ENCODE measurements at regions of chr1 and their contacts with region 1.

Region 1: DNA sequence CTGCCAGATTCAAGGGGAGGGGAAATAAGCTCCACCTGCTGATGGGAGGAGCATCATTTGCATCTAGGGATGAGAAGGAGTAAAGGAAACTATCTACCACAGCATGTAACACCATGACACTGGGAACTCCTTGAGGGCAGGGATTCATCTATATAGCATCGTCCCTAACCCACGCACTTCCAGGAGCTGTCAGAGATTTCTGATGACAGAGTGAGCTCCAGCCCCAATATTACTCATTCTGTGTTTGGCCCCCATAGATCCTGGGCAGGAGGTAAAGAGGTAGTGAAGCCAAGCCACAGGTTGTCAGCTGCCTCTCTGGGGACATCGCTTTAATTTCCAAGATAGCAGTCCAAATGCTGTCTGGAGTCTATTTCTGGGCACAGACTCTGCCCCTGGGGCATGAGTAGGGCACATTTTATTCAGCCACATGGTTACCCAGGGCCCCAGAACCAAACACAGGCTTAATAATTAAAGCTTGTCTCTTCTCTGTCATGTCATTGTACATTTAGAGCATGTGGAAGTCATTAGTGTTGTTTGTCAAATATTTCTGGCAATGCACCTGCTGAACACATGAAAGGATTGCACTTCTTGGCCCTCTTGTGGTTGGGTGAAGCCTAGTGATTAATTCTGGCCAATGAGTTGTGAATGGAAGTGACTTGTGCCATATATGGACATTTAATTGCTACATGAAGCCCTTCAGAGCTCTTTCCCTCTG is 105.9 kb upstream of the POU3F1 start:
- DNase-seq: peak; percentile 51
- ATAC-seq: peak; percentile 85
- H3K4me3 ChIP-seq: no peak overlapping the region
- H3K27ac ChIP-seq: no peak overlapping the region
- H3K4me1 ChIP-seq: peaks cover 11% of the 10 kb centered on the region
- H3K27me3 ChIP-seq: no peaks in the 10 kb centered on the region
- CTCF ChIP-seq: peak in 2 of 3 experiments; percentile 14 to 22; a peak in 1 of 6 replicates
- EP300 ChIP-seq: no peak
- POLR2A ChIP-seq: no peak
- RAD21 ChIP-seq: no peak

Region 2: DNA sequence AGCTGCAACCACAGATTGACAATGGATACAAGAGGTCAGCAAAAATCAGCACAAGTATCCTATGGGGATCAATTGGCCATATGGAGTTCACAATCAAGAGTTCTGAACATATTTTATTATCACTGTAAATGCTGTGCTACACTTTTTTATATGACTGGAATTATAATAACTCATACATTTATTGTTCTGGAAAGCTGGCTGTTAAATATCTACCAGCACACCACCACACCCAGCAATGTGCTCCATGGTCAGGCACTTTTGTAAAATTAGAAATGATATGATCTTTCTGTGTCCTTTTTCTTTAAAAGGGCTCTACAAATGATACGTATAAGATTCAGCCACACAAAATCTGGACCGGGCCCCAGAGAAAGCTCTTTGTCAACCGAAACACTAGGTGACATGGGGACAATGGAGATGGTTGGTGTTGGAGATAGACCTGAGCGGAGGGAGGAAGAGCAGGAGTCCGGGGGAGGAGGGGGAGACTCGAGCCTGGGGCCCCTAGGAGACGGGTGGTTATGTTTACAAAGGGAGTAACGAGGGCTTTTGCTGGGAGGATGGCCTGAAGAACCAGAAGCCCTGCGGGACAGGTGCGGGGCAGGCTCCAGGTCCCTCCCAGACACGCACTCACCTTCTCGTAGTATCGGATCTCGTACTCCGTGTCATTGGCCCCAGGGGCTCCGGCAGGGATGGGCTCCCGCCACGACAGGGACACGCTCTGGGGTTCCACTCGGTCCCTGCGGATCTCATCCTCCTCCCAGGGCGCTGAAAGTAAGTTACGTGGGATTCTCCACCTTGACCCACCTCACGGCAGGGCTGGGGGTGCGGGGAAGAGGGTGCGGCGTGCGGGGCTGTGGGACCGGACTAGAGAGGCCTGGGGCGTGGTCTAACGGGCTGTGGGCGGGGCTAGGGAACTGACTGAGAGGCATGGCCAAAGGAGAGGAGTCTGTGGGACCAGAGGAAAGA is 417.6 kb before region 1 on chr1:
- CTCF ChIA-PET with region 1: no interaction called
- POLR2A ChIA-PET with region 1: no interaction called
- RAD21 ChIA-PET with region 1: no interaction called
- SMC1A ChIA-PET with region 1: no interaction called
- in situ Hi-C with region 1: no loop called
- intact Hi-C with region 1: no loop called
- DNase-seq: no peak
- ATAC-seq: no peak
- H3K4me3 ChIP-seq: no peak overlapping the region
- H3K27ac ChIP-seq: no peak overlapping the region
- H3K4me1 ChIP-seq: no peaks in the 10 kb centered on the region
- H3K27me3 ChIP-seq: peaks cover 0 to under 1% of the 10 kb centered on the region in 2 experiments
- CTCF ChIP-seq: no peak
- EP300 ChIP-seq: no peak
- POLR2A ChIP-seq: no peak
- RAD21 ChIP-seq: no peak

Region 3: GRCh38 chr1:38141483-38141882 is 11.0 kb before region 1 on chr1:
- CTCF ChIA-PET with region 1: interaction called, 11 read pairs
- POLR2A ChIA-PET with region 1: no interaction called
- RAD21 ChIA-PET with region 1: no interaction called
- SMC1A ChIA-PET with region 1: no interaction called
- in situ Hi-C with region 1: no loop called
- intact Hi-C with region 1: no loop called
- DNase-seq: no peak
- ATAC-seq: no peak
- H3K4me3 ChIP-seq: no peak overlapping the region
- H3K27ac ChIP-seq: no peak overlapping the region
- H3K4me1 ChIP-seq: no peaks in the 10 kb centered on the region
- H3K27me3 ChIP-seq: peaks cover 4 to 9% of the 10 kb centered on the region in 2 experiments; a peak in 3 of 4 replicates
- CTCF ChIP-seq: no peak
- EP300 ChIP-seq: no peak
- POLR2A ChIP-seq: no peak
- RAD21 ChIP-seq: no peak

Region 4: DNA sequence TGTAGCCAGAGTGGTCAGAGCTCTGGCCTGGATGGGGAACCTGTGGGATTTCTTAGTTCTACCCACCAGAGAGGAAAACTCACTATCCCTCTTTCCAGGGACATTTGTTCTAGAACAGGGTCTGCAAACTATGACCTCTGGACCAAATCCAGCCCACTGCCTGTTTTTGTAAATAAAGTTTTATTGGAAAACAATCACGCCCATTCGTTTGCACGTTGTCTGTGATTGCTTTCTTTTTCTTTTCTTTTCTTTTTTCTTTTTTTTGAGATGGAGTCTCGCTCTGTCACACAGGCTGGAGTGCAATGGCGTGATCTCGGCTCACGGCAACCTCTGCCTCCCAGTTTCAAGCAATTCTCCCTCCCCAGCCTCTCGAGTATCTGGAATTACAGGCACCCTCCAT is 10.4 kb after region 1 on chr1:
- CTCF ChIA-PET with region 1: interaction called, 5 read pairs
- POLR2A ChIA-PET with region 1: no interaction called
- RAD21 ChIA-PET with region 1: interaction called, 3 read pairs
- SMC1A ChIA-PET with region 1: interaction called, 17 read pairs
- in situ Hi-C with region 1: no loop called
- intact Hi-C with region 1: no loop called
- DNase-seq: no peak
- ATAC-seq: no peak
- H3K4me3 ChIP-seq: no peak overlapping the region
- H3K27ac ChIP-seq: no peak overlapping the region
- H3K4me1 ChIP-seq: no peaks in the 10 kb centered on the region
- H3K27me3 ChIP-seq: 0 out of 4 replicates have a peak, but pooled peaks cover 0 to 3% of the 10 kb centered on the region in 2 experiments
- CTCF ChIP-seq: no peak
- EP300 ChIP-seq: no peak
- POLR2A ChIP-seq: no peak
- RAD21 ChIP-seq: no peak

Region 5: DNA sequence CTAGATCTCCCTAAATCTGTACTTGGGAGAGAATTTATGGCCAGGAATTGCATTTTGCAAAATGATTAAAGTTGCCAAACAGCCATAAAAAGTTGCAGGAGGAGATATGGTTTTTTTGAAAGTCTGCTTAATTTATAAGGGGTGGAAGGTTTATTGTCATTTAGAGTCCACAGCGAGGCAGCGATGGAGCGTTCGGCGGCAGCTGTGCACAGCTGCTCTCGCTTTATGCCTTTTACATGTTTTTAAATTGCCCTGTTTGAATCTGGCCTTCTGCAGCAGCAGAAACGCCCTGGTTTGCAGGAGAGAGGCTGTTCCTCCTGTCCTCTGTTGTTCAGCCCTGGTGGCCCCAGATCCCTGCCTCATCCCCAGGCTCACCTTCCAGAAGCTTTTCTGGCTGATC is 39.0 kb after region 1 on chr1:
- CTCF ChIA-PET with region 1: no interaction called
- POLR2A ChIA-PET with region 1: no interaction called
- RAD21 ChIA-PET with region 1: no interaction called
- SMC1A ChIA-PET with region 1: interaction called, 19 read pairs
- in situ Hi-C with region 1: no loop called
- intact Hi-C with region 1: no loop called
- DNase-seq: no peak
- ATAC-seq: no peak
- H3K4me3 ChIP-seq: no peak overlapping the region
- H3K27ac ChIP-seq: no peak overlapping the region
- H3K4me1 ChIP-seq: peaks cover 4% of the 10 kb centered on the region; the same call in 1 of the 2 replicates
- H3K27me3 ChIP-seq: no peaks in the 10 kb centered on the region; a peak in 2 of 4 replicates
- CTCF ChIP-seq: no peak
- EP300 ChIP-seq: no peak
- POLR2A ChIP-seq: no peak
- RAD21 ChIP-seq: no peak

Region 6: GRCh38 chr1:38360807-38361206 is 208.3 kb after region 1 on chr1:
- CTCF ChIA-PET with region 1: no interaction called
- POLR2A ChIA-PET with region 1: no interaction called
- RAD21 ChIA-PET with region 1: no interaction called
- SMC1A ChIA-PET with region 1: no interaction called
- in situ Hi-C with region 1: no loop called
- intact Hi-C with region 1: no loop called
- DNase-seq: no peak
- ATAC-seq: no peak
- H3K4me3 ChIP-seq: no peak overlapping the region
- H3K27ac ChIP-seq: no peak overlapping the region
- H3K4me1 ChIP-seq: no peaks in the 10 kb centered on the region
- H3K27me3 ChIP-seq: no peaks in the 10 kb centered on the region
- CTCF ChIP-seq: peak in 2 of 3 experiments; percentile 17 to 20; a peak in 3 of 6 replicates
- EP300 ChIP-seq: no peak
- POLR2A ChIP-seq: no peak
- RAD21 ChIP-seq: peak; percentile 55